ENCODE measurements at regions of chr10 and their contacts with region 1.

Region 1: GRCh38 chr10:5434017-5434753 is 21.8 kb downstream of the NET1 start:
- DNase-seq: no peak
- H3K4me3 Mint-ChIP-seq: no peak overlapping the region
- H3K27ac Mint-ChIP-seq: no peak overlapping the region
- H3K4me1 Mint-ChIP-seq: peaks cover 12% of the 10 kb centered on the region
- H3K27me3 Mint-ChIP-seq: no peaks in the 10 kb centered on the region

Region 2: GRCh38 chr10:5423771-5424170 is 10.4 kb before region 1 on chr10:
- CTCF ChIA-PET with region 1: interaction called, 12 read pairs
- DNase-seq: no peak
- H3K4me3 Mint-ChIP-seq: no peak overlapping the region
- H3K27ac Mint-ChIP-seq: no peak overlapping the region
- H3K4me1 Mint-ChIP-seq: peaks cover 2% of the 10 kb centered on the region
- H3K27me3 Mint-ChIP-seq: no peaks in the 10 kb centered on the region

Region 3: GRCh38 chr10:5525561-5526341 is 91.6 kb after region 1 on chr10:
- CTCF ChIA-PET with region 1: no interaction called
- DNase-seq: no peak
- H3K4me3 Mint-ChIP-seq: no peak overlapping the region
- H3K27ac Mint-ChIP-seq: no peak overlapping the region
- H3K4me1 Mint-ChIP-seq: no peaks in the 10 kb centered on the region
- H3K27me3 Mint-ChIP-seq: peaks cover 22% of the 10 kb centered on the region

Region 4: GRCh38 chr10:5595591-5596590 is 161.7 kb after region 1 on chr10:
- CTCF ChIA-PET with region 1: no interaction called
- DNase-seq: no peak
- H3K4me3 Mint-ChIP-seq: no peak overlapping the region
- H3K27ac Mint-ChIP-seq: no peak overlapping the region
- H3K4me1 Mint-ChIP-seq: no peaks in the 10 kb centered on the region
- H3K27me3 Mint-ChIP-seq: peaks cover 34% of the 10 kb centered on the region

Measured in activated naive CD4-positive, alpha-beta T cell treated with anti-CD3 and anti-CD28 coated beads, Interleukin-2, amount 10 ng/mL, durations not matched to agents 7 days and 5 days (primary cell).